ENCODE measurements at regions of chr9 and their contacts with region 1.

Region 1: DNA sequence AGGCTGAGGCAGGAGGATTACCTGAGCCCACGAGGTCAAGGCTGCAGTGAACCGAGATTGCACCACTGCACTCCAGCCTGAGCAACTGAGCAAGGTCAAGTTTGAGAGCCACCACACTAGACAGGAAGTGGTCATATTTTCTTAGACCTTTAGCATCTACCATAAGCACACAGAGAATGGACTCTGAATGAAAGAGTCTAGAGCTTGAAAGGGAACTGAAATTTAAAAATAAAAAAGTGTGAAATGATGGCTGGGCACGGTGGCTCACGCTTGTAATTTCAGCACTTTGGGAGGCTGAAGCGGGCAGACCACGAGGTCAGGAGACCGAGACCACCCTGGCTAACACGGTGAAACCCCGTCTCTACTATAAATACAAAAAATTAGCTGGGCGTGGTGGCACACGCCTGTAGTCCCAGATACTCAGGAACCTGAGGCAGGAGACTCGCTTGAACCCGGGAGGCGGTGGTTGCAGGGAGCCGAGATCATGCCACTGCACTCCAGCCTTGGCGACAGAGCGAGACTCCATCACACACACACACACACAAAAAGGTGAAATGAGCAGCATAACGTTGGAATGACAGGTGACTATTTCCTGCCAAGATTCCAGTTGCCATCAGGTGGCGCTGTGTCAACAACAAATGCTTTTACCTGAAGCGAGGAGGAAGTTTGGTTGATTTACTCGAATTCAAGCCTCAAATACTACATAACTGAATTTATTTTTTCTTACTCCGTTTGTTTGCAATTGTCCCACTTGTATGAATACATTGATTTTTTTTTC is 21.3 kb upstream of the AK3 start:
- DNase-seq: peak; percentile 75 to 79 (median 77)
- H3K4me3 ChIP-seq: no peak overlapping the region
- H3K4me3 Mint-ChIP-seq: peak overlapping the region in 6 of 8 donors; percentile 17 to 54 (median 42)
- H3K27ac ChIP-seq: no peak overlapping the region
- H3K27ac Mint-ChIP-seq: peak overlapping the region in 2 of 7 donors; percentile 28 to 71
- H3K4me1 ChIP-seq: peaks cover 11% of the 10 kb centered on the region
- H3K4me1 Mint-ChIP-seq: peaks cover 5 to 12% (median 6%) of the 10 kb centered on the region in 4 donors
- H3K27me3 ChIP-seq: peaks cover 4% of the 10 kb centered on the region
- H3K27me3 Mint-ChIP-seq: peaks cover 0 to 4% of the 10 kb centered on the region in 2 donors

Region 2: DNA sequence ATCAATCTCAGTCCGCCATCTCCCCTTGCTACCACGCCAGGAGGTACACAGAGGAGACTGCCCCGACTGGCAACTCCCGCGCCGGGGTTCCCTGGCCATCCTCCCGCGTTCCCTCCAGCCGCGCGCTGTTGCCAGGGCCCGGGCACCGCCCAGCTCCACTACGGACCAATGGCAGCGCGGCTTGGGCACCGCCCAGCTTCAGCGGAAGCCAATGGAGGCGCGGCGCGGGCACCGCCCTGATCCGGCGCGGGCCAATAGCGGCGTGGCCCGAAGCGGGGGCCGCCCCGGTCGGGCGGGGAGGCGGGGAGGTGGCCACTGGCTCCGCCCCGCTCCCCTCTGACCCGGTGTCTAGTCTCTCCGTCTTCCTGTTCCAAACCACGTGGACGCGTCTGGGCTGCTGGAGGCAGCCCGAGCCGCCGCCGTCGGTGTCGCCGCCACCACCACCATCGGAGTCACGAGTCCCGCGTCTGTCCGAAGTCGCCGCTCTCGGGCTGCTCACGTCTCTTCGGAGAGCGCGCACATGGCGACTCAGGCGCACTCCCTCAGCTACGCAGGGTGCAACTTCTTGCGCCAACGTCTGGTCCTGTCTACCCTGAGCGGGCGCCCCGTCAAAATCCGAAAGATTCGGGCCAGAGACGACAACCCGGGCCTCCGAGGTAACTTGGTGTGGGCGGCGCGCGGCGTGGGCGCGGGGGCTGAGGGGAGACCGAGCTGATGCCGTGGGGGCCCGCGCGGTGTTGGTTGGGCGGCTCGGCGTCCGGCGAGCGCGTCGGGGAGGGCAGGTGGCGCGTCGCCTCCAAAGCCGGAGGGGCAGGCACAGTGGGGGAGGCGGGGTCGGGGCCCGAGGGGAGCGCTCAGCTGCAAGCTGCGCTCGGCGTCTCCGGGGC is 30.5 kb after region 1 on chr9 and contains the start of gene RCL1:
- CTCF ChIA-PET with region 1: interaction called, 82 read pairs
- POLR2A ChIA-PET with region 1: interaction called, 3 read pairs
- intact Hi-C with region 1: loop called (anchors 1 kb)
- DNase-seq: peak; percentile 95 to 98 (median 97)
- H3K4me3 ChIP-seq: peak within 1 kb of the TSS; percentile 83 to 88
- H3K4me3 Mint-ChIP-seq: peak within 1 kb of the TSS; percentile 93 to 97 (median 95)
- H3K27ac ChIP-seq: peak within 1 kb of the TSS; percentile 70
- H3K27ac Mint-ChIP-seq: peak within 1 kb of the TSS; percentile 84 to 97 (median 96)
- H3K4me1 ChIP-seq: peaks cover 23% of the 10 kb centered on the region
- H3K4me1 Mint-ChIP-seq: peaks cover 29 to 52% (median 38%) of the 10 kb centered on the region in 4 donors
- H3K27me3 ChIP-seq: no peaks in the 10 kb centered on the region
- H3K27me3 Mint-ChIP-seq: peaks cover 0 to 4% of the 10 kb centered on the region in 2 donors
- total RNA-seq, gene RCL1: 15.2 to 17.8 TPM

Region 3: GRCh38 chr9:4923580-4924544 is 161.6 kb after region 1 on chr9:
- CTCF ChIA-PET with region 1: interaction called, 58 read pairs
- POLR2A ChIA-PET with region 1: interaction called, 3 read pairs
- intact Hi-C with region 1: loop called (anchors 1 kb)
- DNase-seq: peak in 4 of 5 donors; percentile 28 to 41 (median 28)
- H3K4me3 ChIP-seq: no peak overlapping the region
- H3K4me3 Mint-ChIP-seq: no peak overlapping the region
- H3K27ac ChIP-seq: no peak overlapping the region
- H3K27ac Mint-ChIP-seq: peak overlapping the region in 1 of 7 donors; percentile 2
- H3K4me1 ChIP-seq: no peaks in the 10 kb centered on the region
- H3K4me1 Mint-ChIP-seq: peaks cover 0 to 6% (median 3%) of the 10 kb centered on the region in 4 donors
- H3K27me3 ChIP-seq: no peaks in the 10 kb centered on the region
- H3K27me3 Mint-ChIP-seq: no peaks in the 10 kb centered on the region

Region 4: DNA sequence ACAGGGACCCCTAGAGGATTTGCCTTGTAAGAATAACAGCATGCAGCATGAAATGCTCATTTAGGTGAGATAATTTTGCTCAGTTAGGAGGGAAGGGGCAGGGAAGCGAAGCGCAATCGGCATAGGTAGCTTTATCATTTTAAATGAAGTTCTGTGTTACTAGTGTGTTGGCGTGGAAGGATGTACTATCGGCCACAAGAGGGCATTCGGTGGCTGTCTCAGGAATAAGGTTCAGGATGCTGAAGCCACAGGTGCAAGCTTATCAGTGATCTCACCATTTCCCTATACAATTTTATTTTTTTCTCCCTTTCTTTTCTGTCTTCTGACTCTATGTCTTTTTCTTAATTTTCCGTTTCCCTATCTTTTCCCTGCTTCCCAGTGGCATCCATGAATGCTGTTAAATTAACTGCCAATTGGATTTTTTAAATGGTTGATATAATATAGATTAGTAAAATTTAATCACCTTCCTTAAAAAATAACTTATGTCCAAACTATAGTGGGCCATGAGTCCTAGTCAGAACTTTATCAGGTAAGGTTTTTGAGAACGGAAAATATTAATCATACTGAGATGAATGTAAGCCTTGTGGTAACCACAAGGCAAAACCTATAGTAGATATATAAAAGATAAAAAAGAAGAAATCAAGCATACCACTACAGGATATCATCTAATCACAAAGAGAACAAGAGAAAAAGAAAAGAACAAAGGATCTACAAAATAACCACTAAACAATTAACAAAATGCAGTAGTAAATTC is 424.3 kb after region 1 on chr9:
- CTCF ChIA-PET with region 1: interaction called, 3 read pairs
- POLR2A ChIA-PET with region 1: no interaction called
- intact Hi-C with region 1: loop called (anchors 5 kb)
- DNase-seq: peak; percentile 67 to 72 (median 71)
- H3K4me3 ChIP-seq: no peak overlapping the region
- H3K4me3 Mint-ChIP-seq: peak overlapping the region in 2 of 8 donors; percentile 3 to 48
- H3K27ac ChIP-seq: no peak overlapping the region
- H3K27ac Mint-ChIP-seq: peak overlapping the region in 5 of 7 donors; percentile 8 to 54 (median 10)
- H3K4me1 ChIP-seq: peaks cover 10% of the 10 kb centered on the region
- H3K4me1 Mint-ChIP-seq: peaks cover 4 to 13% (median 11%) of the 10 kb centered on the region in 4 donors
- H3K27me3 ChIP-seq: no peaks in the 10 kb centered on the region
- H3K27me3 Mint-ChIP-seq: no peaks in the 10 kb centered on the region

Measured in CD4-positive, alpha-beta memory T cell (primary cell).